BJ (cell line): ENCODE measurements at regions of chr1 and their contacts with region 1.

Region 1: DNA sequence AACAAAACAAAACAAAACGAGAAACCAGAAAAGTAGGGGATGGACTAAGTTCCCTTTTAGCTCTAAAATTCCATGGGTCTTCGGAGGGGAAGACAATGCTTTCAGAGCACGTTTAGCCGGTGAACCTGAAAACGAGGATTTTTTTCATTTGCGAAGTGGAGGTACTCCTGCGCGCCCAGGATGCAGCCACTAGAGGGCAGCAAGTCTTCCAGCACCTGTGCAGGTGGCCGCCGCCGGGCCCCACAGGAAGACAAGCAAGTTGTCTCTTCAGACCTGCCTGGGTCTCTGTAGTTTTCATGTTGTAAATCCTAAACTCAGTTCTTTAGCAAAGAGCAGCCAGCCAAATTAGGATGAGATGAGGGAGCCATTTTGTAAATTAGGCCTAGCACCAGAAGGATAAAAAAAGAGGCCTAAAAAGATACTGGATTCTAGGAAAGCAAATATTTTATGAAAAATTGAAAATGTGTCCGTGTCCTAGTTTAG is 17.7 kb upstream of the SNX27 start:
- DNase-seq: no peak
- H3K4me3 ChIP-seq: no peak overlapping the region
- H3K27me3 ChIP-seq: no peaks in the 10 kb centered on the region
- CTCF ChIP-seq: peak; percentile 97

Region 2: GRCh38 chr1:151581952-151582351 is 12.2 kb before region 1 on chr1:
- CTCF ChIA-PET with region 1: interaction called, 15 read pairs
- POLR2A ChIA-PET with region 1: no interaction called
- DNase-seq: no peak
- H3K4me3 ChIP-seq: no peak overlapping the region
- H3K27me3 ChIP-seq: no peaks in the 10 kb centered on the region
- CTCF ChIP-seq: no peak

Region 3: DNA sequence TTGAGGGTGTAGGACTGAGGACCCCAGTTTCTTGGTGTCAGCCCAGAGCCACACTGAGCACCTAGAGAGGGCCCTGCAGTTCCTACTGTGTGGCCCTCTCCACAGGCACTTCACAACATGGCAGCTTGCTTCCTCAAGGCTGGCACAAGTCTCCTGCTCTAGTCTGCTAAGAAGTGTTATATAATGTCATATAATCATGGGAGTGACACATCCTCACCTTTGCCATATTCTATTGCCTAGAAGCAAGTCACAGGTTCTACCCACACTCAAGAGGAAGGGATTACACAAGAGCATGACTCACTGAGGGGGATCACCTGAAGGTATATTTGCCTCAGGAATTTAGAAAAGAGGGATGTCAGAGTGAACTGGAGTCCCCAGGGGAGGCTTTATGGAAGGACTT is 12.2 kb after region 1 on chr1:
- CTCF ChIA-PET with region 1: interaction called, 18 read pairs
- POLR2A ChIA-PET with region 1: no interaction called
- DNase-seq: no peak
- H3K4me3 ChIP-seq: no peak overlapping the region
- H3K27me3 ChIP-seq: no peaks in the 10 kb centered on the region
- CTCF ChIP-seq: no peak

Region 4: DNA sequence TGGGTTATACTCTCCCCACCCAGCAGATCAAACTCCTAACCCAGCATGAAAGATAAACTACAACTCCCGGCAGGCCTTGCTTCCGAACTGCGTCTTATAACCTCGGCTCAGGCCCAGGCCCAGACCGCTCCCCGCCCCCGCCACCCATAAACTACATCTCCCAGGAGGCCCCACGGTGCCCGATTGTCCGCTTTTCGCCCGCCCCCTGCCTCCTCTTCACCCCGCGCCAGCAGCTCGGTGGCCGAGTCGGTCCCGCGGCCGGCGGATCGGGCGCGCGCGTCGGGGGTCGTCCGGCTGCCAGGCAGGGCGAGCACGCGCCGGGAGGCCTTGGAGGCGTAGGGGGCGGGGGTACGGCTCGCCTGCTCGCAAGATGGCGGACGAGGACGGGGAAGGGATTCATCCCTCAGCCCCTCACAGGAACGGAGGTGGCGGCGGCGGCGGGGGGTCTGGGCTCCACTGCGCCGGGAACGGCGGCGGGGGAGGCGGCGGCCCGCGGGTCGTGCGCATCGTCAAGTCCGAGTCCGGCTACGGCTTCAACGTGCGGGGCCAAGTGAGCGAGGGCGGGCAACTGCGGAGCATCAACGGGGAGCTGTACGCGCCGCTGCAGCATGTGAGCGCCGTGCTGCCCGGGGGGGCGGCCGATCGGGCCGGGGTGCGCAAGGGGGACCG is 17.8 kb after region 1 on chr1 and contains the start of gene SNX27:
- CTCF ChIA-PET with region 1: interaction called, 17 read pairs
- POLR2A ChIA-PET with region 1: no interaction called
- DNase-seq: peak; percentile 55
- H3K4me3 ChIP-seq: peak within 1 kb of the TSS; percentile 97
- H3K27me3 ChIP-seq: no peaks in the 10 kb centered on the region
- CTCF ChIP-seq: no peak
- polyA plus RNA-seq, gene SNX27: 7.0 and 10.4 TPM in 2 replicates

Region 5: DNA sequence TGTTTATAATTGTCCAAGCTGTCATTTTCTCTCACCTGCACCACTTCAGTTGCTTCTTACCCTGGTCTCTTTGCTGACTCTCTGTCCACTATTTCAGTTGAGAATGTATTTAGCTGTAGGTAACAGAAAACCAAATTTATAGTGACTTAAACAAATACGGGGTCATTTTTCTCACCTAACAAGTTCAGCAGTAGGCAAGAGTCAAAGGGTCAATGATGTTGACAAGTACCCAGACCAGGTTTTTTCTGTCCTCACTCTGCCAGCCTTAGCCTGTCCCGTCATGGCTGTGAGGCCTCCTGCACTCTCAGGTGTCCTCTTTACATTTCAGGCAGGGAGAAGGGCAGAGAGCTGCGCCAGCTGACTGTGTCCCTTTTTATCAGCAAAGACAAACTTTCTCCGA is 138.9 kb after region 1 on chr1:
- CTCF ChIA-PET with region 1: interaction called, 27 read pairs
- POLR2A ChIA-PET with region 1: no interaction called
- DNase-seq: no peak
- H3K4me3 ChIP-seq: no peak overlapping the region
- H3K27me3 ChIP-seq: peaks cover 8% of the 10 kb centered on the region
- CTCF ChIP-seq: no peak

Region 6: DNA sequence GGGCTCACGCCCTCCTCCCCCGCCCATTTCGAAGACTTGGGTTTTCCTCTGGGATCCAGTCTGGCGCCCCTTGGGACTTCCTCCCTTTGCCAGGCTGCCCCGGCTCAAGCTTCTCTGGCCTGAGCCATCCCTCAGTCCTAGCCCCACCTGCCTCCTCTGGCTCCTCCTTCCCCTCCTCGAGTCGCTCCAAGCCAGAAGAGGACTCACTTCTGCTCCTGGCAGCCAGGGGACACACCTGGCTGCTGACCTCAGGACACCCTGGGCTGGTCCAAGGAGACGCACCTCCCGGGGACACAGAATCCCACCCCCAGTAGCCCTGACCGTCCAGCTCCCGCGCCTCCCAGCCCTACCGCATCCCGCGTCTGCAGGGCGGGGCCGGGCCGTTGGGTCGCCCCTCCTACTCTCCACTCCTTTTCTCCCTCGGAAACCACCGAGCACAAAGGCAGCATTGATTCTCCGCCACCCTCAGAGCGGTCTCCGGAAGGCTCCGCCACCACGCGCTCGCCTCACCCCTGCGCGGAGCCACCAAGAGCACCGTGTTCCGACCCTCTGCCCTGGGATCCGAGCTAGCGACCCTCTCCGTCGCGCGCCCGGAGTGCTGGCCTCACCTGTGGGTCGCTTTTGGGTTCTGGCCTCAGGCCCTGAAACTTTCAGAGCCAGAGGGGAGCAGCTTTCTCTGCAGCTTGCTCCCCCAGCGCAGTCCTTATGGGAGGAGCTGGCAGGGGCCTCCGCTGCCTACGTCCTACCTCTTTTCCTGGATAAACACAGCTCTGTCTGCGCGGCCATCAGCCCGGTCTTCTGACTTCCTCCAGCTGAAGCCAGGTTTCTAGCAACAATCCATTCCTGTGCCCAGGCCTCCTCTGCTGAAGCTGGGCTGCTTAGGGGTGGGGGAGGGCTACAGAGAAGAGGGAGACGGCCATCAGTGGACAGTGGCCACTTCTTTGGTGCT is 245.5 kb after region 1 on chr1 and contains the start of gene C2CD4D:
- CTCF ChIA-PET with region 1: no interaction called
- POLR2A ChIA-PET with region 1: no interaction called
- DNase-seq: no peak
- H3K4me3 ChIP-seq: 0 out of 2 replicates have a peak within 1 kb of the TSS, but pooled peaks have one; percentile 8
- H3K27me3 ChIP-seq: peaks cover 22% of the 10 kb centered on the region
- CTCF ChIP-seq: no peak
- polyA plus RNA-seq, gene C2CD4D: not detected in 2 replicates